HepG2 (cell line): ENCODE measurements at regions of chr15 and their contacts with region 1.

Region 1: DNA sequence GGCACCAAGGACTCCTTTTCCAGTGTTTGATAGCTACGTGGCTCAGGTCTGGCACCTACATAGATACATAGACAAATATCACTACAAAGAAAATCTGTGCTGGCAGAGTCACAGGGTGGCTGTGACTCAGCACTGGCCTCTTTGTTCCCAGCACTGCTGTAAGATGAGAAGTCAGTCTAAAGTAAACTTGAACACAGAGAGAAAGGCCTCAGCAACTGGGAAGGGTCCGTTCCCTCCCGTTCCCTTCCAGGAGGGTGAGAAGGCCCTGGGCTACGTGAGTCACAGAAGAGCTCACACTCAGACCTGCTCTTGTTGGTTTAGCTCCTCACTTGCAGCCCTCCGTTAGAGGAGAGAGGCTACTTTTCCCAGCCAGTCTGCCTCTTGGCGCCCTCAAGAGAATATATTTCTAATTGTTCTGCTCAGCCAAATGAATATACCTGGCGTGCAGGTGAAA is 23.1 kb downstream of the ANXA2 start:
- DNase-seq: peak; percentile 98
- ATAC-seq: peak; percentile 98
- H3K4me3 ChIP-seq: no peak overlapping the region
- H3K27ac ChIP-seq: peak overlapping the region; percentile 93
- H3K4me1 ChIP-seq: peaks cover 93% of the 10 kb centered on the region
- H3K27me3 ChIP-seq: no peaks in the 10 kb centered on the region
- CTCF ChIP-seq: no peak; the same call in 1 of the 2 replicates
- EP300 ChIP-seq: peak; percentile 70 to 87; a peak in 3 of 4 replicates
- POLR2A ChIP-seq: peak; percentile 42 to 78; a peak in 3 of 4 replicates
- RAD21 ChIP-seq: peak; percentile 37; the same call in 1 of the 2 replicates

Region 2: GRCh38 chr15:60362321-60363086 is 12.2 kb before region 1 on chr15:
- CTCF ChIA-PET with region 1: no interaction called
- POLR2A ChIA-PET with region 1: interaction called, 17 read pairs
- in situ Hi-C with region 1: no loop called
- intact Hi-C with region 1: no loop called
- DNase-seq: peak; percentile 11
- ATAC-seq: no peak
- H3K4me3 ChIP-seq: no peak overlapping the region
- H3K27ac ChIP-seq: no peak overlapping the region
- H3K4me1 ChIP-seq: no peaks in the 10 kb centered on the region
- H3K27me3 ChIP-seq: no peaks in the 10 kb centered on the region
- CTCF ChIP-seq: no peak
- EP300 ChIP-seq: no peak
- POLR2A ChIP-seq: no peak
- RAD21 ChIP-seq: no peak

Region 3: GRCh38 chr15:60385620-60386552 is 11.2 kb after region 1 on chr15:
- CTCF ChIA-PET with region 1: no interaction called
- POLR2A ChIA-PET with region 1: interaction called, 117 read pairs
- in situ Hi-C with region 1: no loop called
- intact Hi-C with region 1: no loop called
- DNase-seq: no peak
- ATAC-seq: no peak
- H3K4me3 ChIP-seq: no peak overlapping the region
- H3K27ac ChIP-seq: no peak overlapping the region
- H3K4me1 ChIP-seq: peaks cover 70% of the 10 kb centered on the region
- H3K27me3 ChIP-seq: no peaks in the 10 kb centered on the region
- CTCF ChIP-seq: no peak
- EP300 ChIP-seq: no peak
- POLR2A ChIP-seq: no peak
- RAD21 ChIP-seq: no peak

Region 4: GRCh38 chr15:60444289-60444912 is 69.7 kb after region 1 on chr15:
- CTCF ChIA-PET with region 1: no interaction called
- POLR2A ChIA-PET with region 1: interaction called, 5 read pairs
- in situ Hi-C with region 1: no loop called
- intact Hi-C with region 1: loop called (anchors 5 kb)
- DNase-seq: peak; percentile 28
- ATAC-seq: no peak
- H3K4me3 ChIP-seq: no peak overlapping the region
- H3K27ac ChIP-seq: no peak overlapping the region
- H3K4me1 ChIP-seq: peaks cover 27% of the 10 kb centered on the region
- H3K27me3 ChIP-seq: no peaks in the 10 kb centered on the region
- CTCF ChIP-seq: peak; percentile 27
- EP300 ChIP-seq: no peak
- POLR2A ChIP-seq: no peak
- RAD21 ChIP-seq: peak; percentile 16; the same call in 1 of the 2 replicates

Region 5: DNA sequence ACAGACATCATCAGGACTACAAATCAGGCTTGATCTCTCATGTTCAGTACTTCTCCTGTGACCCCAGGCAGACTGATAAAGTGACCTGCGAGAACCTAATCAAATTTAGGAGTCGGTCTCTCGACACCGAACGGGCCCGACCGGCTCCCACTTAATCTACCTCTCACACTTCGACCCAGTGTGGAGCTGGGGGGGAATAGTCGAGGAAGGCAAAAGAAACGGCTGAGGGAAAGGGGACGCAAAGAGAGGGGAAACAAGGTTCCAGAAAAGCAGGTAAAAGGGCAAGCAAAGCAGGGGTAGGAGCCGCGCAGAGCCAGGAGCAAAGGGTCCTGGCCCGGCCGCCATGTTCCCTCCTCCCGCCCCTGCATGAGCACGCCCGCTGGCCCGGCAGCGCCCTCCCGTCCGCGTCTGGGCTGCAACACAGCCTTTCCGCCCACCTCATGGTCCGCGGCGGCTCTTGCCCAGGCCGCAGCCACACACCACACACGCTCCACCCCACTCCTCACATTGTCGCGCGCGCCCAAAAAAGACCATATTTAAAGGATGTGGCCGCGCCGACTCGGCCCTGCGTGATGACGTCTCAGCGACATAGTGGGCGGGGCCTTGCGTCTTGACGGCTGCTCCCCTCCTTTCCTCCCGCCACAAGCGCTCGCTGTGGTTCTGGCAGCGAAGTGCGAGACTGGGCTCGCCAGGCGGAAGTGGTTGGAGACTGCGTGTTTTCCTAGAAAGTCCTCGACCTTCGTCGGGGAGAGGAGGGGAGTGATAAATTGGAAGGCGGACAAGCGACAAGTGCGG is 104.1 kb after region 1 on chr15 and contains the start of gene ICE2:
- CTCF ChIA-PET with region 1: no interaction called
- POLR2A ChIA-PET with region 1: interaction called, 12 read pairs
- in situ Hi-C with region 1: no loop called
- intact Hi-C with region 1: no loop called
- DNase-seq: peak; percentile 89
- ATAC-seq: peak; percentile 94
- H3K4me3 ChIP-seq: peak within 1 kb of the TSS; percentile 67 to 94 (median 90)
- H3K27ac ChIP-seq: peak within 1 kb of the TSS; percentile 93
- H3K4me1 ChIP-seq: peaks cover 43% of the 10 kb centered on the region
- H3K27me3 ChIP-seq: no peaks in the 10 kb centered on the region; a peak in 1 of 5 replicates
- CTCF ChIP-seq: peak; percentile 57
- EP300 ChIP-seq: no peak
- POLR2A ChIP-seq: peak; percentile 92 to 95
- RAD21 ChIP-seq: no peak; the same call in none of the 2 replicates
- total RNA-seq, gene ICE2: 26.4 and 40.9 TPM in 2 replicates